ENCODE measurements at regions of chr18 and their contacts with region 1.

Region 1: GRCh38 chr18:24726727-24727492 is 266.5 kb downstream of the HRH4 start:
- DNase-seq: peak; percentile 71 to 88
- ATAC-seq: peak; percentile 86
- H3K4me3 ChIP-seq: peak overlapping the region; percentile 40 to 71
- H3K27ac ChIP-seq: no peak overlapping the region
- H3K4me1 ChIP-seq: no peaks in the 10 kb centered on the region
- H3K27me3 ChIP-seq: no peaks in the 10 kb centered on the region

Region 2: DNA sequence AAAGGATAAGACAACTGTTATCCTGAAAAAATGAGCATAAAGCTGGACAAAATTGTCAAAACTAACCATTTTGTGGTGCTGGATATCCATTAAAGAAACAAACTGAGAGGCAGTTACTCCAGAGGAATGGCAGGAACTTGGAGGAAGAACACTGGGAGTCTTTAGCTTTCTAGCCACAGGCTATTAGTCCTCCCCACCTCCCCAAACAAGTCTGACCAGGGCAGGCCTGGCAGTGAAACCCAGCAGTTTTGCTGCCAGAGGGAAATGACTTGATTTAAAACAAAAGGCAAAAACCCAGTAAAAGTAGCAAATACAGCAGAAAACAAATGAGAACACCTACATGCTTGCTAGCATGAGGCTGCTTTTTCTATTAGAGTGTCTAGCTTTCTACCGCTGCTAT is 364.2 kb before region 1 on chr18:
- intact Hi-C with region 1: loop called (anchors 5 to 10 kb)
- DNase-seq: no peak
- ATAC-seq: no peak
- H3K4me3 ChIP-seq: no peak overlapping the region
- H3K27ac ChIP-seq: no peak overlapping the region
- H3K4me1 ChIP-seq: no peaks in the 10 kb centered on the region
- H3K27me3 ChIP-seq: no peaks in the 10 kb centered on the region

Region 3: GRCh38 chr18:24368749-24369148 is 358.2 kb before region 1 on chr18:
- intact Hi-C with region 1: loop called in 1 of 2 experiments (anchors 10 kb)
- DNase-seq: no peak
- ATAC-seq: no peak
- H3K4me3 ChIP-seq: no peak overlapping the region
- H3K27ac ChIP-seq: no peak overlapping the region
- H3K4me1 ChIP-seq: no peaks in the 10 kb centered on the region
- H3K27me3 ChIP-seq: no peaks in the 10 kb centered on the region

Region 4: DNA sequence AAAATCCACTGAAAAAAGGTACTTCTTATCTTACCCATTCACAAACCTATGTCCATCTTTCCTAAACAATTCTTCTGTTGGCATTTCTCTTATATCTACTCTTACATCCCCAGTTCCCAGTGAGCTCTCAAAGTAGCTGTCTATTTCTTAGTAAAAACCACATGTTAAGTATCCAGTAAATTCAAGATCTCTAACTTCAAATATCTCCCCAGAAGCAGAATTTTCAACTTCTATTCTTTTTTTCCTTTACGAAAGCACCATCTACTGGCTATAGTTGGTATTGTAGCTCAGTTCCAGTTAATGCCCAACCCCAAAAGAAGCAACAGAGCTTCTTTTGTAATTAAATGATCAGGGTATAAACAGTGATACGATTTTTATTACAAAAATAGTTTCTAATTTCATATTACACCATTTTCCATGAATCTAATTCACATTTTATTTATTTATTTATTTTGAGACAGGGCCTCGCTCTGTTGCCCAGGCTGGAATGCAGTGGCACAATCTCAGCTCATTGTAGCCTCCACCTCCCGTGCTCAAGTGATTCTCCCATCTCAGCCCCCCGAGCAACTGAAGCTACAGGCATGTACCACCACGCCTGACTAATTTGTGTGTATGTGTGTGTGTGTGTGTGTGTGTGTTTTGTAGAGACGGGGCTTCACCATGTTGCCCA is 238.0 kb before region 1 on chr18:
- intact Hi-C with region 1: loop called (anchors 5 kb)
- DNase-seq: no peak
- ATAC-seq: peak; percentile 74
- H3K4me3 ChIP-seq: no peak overlapping the region
- H3K27ac ChIP-seq: no peak overlapping the region
- H3K4me1 ChIP-seq: no peaks in the 10 kb centered on the region
- H3K27me3 ChIP-seq: no peaks in the 10 kb centered on the region

Region 5: DNA sequence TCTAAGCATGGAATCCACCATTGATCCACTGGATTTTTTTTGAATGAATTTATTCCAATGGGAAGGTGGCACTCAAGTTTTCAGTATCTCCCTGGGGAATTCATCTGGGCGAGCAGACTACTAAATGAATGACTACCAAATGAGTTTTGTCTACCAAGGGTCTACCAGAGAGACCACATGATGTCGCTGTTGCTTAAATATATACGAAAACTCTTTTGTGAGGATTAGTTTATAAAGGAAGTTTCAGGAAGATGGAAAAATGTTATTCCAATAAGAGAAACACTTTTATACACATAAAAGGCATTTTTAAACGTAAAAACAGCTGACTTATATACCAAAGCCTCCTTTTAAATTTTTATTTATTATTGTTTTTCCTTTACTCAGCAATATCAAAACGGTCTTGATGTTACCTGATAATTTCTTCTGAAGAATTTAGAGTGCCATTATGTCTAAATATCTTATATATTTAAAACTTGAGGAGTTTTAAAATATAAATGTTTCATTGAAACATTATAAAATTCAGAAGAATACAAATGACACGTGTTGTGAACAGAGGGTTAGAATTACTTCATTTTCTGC is 126.7 kb before region 1 on chr18:
- intact Hi-C with region 1: loop called (anchors 2 to 5 kb)
- DNase-seq: no peak
- ATAC-seq: no peak
- H3K4me3 ChIP-seq: no peak overlapping the region
- H3K27ac ChIP-seq: no peak overlapping the region
- H3K4me1 ChIP-seq: no peaks in the 10 kb centered on the region
- H3K27me3 ChIP-seq: no peaks in the 10 kb centered on the region

Region 6: DNA sequence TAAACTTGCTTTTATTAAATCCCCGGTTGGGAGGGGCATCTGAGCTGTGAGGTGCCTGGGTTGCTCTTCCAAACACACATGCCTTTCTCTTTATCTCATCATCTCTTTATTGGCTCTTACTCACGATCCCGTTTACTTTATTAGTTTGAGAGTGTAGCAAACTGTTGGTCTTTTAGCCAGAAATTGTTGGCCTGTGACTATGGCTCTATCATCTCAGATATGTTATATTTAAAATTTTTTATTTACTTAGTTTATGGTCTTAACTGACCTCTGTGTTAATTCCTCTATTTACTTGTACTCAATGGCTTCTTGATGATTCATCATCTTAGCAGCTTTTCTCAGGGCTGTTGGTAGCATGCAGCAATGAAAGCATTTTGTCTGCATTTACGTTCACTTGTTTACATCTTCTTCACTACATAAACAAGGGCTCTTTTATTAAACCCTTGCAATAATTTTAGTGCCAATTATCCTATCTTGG is 141.9 kb after region 1 on chr18:
- intact Hi-C with region 1: no loop called
- DNase-seq: no peak
- ATAC-seq: no peak
- H3K4me3 ChIP-seq: no peak overlapping the region
- H3K27ac ChIP-seq: no peak overlapping the region
- H3K4me1 ChIP-seq: no peaks in the 10 kb centered on the region
- H3K27me3 ChIP-seq: no peaks in the 10 kb centered on the region